B cell (primary cell): ENCODE measurements at regions of chr4 and their contacts with region 1.

Region 1: DNA sequence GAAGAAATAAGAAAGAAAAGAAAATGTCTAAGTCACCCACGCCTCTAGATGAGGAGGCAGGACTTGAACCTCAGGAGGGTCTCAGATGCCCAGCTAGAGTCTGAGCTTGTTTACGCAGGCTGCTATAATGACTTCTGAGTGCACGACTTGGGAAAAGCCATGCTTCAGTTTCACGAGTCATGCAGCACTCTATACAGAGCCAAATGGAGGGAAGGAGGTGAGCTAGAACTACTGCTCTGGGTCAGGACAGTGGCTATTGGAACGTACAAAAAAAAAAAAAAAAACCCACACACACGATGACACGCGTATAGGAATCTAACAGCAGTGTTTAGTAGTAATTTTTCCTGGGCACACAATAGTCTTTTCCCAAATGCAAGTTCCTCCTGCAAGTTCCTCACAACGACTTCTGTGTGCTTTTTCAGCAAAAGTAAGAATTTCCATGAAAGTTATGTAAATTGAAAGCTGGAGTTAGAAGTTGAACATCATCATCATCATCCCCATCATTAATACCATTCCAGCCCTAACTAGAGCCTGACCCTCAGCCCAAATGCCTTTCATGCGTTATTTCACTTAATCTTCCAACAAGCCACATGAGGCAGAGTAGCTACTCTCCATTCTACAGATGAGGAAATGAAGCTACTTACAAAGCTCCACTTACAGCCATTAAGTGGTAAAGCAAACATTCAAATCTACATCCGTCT is 36.6 kb downstream of the IRF2 start:
- DNase-seq: peak; percentile 52
- ATAC-seq: peak; percentile 61
- H3K4me3 ChIP-seq: no peak overlapping the region
- H3K4me3 Mint-ChIP-seq: peak overlapping the region; percentile 66
- H3K27ac ChIP-seq: peak overlapping the region; percentile 35 to 50
- H3K27ac Mint-ChIP-seq: peak overlapping the region; percentile 78
- H3K4me1 ChIP-seq: peaks cover 36 to 41% of the 10 kb centered on the region in 2 donors
- H3K4me1 Mint-ChIP-seq: peaks cover 67% of the 10 kb centered on the region
- H3K27me3 ChIP-seq: no peaks in the 10 kb centered on the region
- H3K27me3 Mint-ChIP-seq: no peaks in the 10 kb centered on the region
- CTCF ChIP-seq: no peak

Region 2: GRCh38 chr4:184453365-184454160 is 15.8 kb after region 1 on chr4:
- CTCF ChIA-PET with region 1: interaction called, 10 read pairs
- POLR2A ChIA-PET with region 1: interaction called, 3 read pairs
- intact Hi-C with region 1: no loop called
- DNase-seq: peak; percentile 63
- ATAC-seq: peak; percentile 66
- H3K4me3 ChIP-seq: peak overlapping the region in 2 of 5 experiments; percentile 23 to 27
- H3K4me3 Mint-ChIP-seq: peak overlapping the region; percentile 80
- H3K27ac ChIP-seq: peak overlapping the region; percentile 60 to 69
- H3K27ac Mint-ChIP-seq: peak overlapping the region; percentile 91
- H3K4me1 ChIP-seq: peaks cover 83 to 85% of the 10 kb centered on the region in 2 donors
- H3K4me1 Mint-ChIP-seq: peaks cover 85% of the 10 kb centered on the region
- H3K27me3 ChIP-seq: no peaks in the 10 kb centered on the region
- H3K27me3 Mint-ChIP-seq: no peaks in the 10 kb centered on the region
- CTCF ChIP-seq: no peak